Activated T-helper 2 cell treated with anti-CD3 and anti-CD28 coated beads, Interferon-gamma antibody, Interleukin-2, Interleukin-4, amounts not matched to agents 10 μg/mL and 5 μg/mL and 100 μg/mL, durations not matched to agents 14 hours and 24 hours and 36 hours (primary cell): ENCODE measurements at regions of chr13 and their contacts with region 1.

Region 1: GRCh38 chr13:51452361-51453206 is at the start of gene INTS6:
- DNase-seq: peak; percentile 99
- H3K4me3 Mint-ChIP-seq: peak within 1 kb of the TSS; percentile 94
- H3K27ac Mint-ChIP-seq: peak within 1 kb of the TSS; percentile 99
- H3K4me1 Mint-ChIP-seq: peaks cover 31% of the 10 kb centered on the region
- H3K27me3 Mint-ChIP-seq: no peaks in the 10 kb centered on the region
- total RNA-seq, gene INTS6: 54.9 and 55.9 TPM in 2 replicates

Region 2: GRCh38 chr13:51230477-51231105 is 222.0 kb before region 1 on chr13:
- intact Hi-C with region 1: no loop called
- DNase-seq: no peak
- H3K4me3 Mint-ChIP-seq: no peak overlapping the region
- H3K27ac Mint-ChIP-seq: no peak overlapping the region
- H3K4me1 Mint-ChIP-seq: peaks cover 3% of the 10 kb centered on the region
- H3K27me3 Mint-ChIP-seq: peaks cover 48% of the 10 kb centered on the region

Region 3: DNA sequence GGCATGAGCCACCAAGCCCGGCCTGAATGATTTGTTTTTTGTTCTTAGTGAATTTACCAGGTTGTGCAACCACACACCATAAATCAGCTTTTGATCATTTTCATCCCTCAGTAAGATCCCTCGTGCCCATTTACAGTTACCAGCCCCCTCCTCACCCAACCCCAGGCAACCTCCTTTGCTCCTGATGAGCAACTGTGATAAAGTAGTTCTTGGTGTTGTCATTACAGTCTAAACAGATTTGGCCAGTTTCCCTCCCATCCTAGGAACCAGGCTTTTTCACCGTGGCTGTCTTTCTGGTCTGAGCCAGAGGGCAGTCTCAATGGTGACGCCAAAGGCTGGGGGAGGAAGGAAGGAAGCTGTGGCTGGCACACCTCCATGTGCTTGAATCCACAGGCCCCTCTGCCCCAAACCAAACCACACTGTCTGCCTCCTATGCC is 70.5 kb after region 1 on chr13:
- intact Hi-C with region 1: loop called (anchors 2 kb)
- DNase-seq: no peak
- H3K4me3 Mint-ChIP-seq: no peak overlapping the region
- H3K27ac Mint-ChIP-seq: no peak overlapping the region
- H3K4me1 Mint-ChIP-seq: peaks cover 24% of the 10 kb centered on the region
- H3K27me3 Mint-ChIP-seq: no peaks in the 10 kb centered on the region

Region 4: DNA sequence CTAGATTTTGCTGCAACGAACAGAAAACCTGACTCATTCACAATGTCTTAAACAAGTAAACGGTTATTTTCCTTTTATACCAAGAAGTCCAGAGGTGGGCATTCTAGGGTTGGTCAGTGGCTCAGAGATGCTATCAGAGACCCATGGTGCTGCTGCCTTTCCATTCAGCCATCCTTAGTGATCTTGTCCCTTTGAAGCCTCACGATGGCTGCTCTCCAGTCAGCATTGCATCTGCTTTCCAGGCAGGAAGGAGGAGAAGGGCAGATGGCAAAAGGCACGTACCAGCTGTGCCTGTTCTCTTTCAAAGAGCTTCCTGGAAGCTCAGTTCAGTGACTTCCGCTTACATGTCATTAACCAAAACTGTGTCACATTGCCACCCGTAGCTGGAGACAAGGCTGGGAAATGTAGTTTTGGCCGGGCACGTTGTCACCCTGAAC is 161.8 kb after region 1 on chr13:
- intact Hi-C with region 1: loop called (anchors 1 kb)
- DNase-seq: peak; percentile 34
- H3K4me3 Mint-ChIP-seq: peak overlapping the region; percentile 82
- H3K27ac Mint-ChIP-seq: peak overlapping the region; percentile 97
- H3K4me1 Mint-ChIP-seq: peaks cover 17% of the 10 kb centered on the region
- H3K27me3 Mint-ChIP-seq: no peaks in the 10 kb centered on the region

Region 5: GRCh38 chr13:51803422-51804294 is 351.1 kb after region 1 on chr13 and contains the start of gene DHRS12:
- intact Hi-C with region 1: loop called (anchors 1 kb)
- DNase-seq: peak; percentile 82
- H3K4me3 Mint-ChIP-seq: peak within 1 kb of the TSS; percentile 87
- H3K27ac Mint-ChIP-seq: peak within 1 kb of the TSS; percentile 98
- H3K4me1 Mint-ChIP-seq: peaks cover 33% of the 10 kb centered on the region
- H3K27me3 Mint-ChIP-seq: peaks cover 4% of the 10 kb centered on the region
- total RNA-seq, gene DHRS12: 2.2 and 3.1 TPM in 2 replicates

Region 6: DNA sequence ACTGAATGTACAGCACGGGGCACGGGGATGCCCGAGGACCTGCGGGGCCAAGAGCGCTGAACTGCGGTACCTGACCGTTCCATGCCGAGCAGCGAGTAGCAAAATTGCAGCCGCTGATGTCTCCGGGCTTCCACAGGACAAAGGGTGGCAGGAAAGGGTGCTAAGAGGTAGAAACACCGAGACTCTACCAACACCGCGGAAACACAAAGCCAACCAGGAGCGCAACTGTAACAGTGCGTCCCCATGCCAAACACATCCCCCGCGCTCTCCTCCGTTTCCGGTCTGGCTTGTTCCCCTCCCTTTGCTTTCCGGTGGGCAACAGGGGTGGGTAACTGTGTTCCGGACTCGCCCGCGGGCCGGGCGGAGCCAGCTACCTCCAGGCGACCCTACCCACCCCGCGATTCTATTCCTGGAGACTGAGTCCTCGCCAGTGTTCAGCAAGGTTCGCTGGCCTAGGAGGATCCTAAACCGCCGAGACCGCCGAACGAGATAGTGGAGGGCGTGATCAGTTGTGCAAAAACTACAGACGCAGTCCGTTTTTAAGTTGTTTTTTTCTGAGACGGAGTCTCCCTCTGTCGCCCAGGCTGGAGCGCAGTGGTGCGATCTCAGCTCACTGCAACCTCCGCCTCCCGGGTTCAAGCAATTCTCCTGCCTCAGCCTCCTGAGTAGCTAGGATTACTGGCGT is 741.7 kb after region 1 on chr13:
- intact Hi-C with region 1: loop called (anchors 10 kb)
- DNase-seq: peak; percentile 88
- H3K4me3 Mint-ChIP-seq: peak overlapping the region; percentile 95
- H3K27ac Mint-ChIP-seq: peak overlapping the region; percentile 96
- H3K4me1 Mint-ChIP-seq: peaks cover 9% of the 10 kb centered on the region
- H3K27me3 Mint-ChIP-seq: no peaks in the 10 kb centered on the region

Region 7: GRCh38 chr13:52652196-52652979 is 1199.8 kb after region 1 on chr13 and contains the start of gene SUGT1:
- intact Hi-C with region 1: loop called (anchors 5 kb)
- DNase-seq: peak; percentile 94
- H3K4me3 Mint-ChIP-seq: no peak within 1 kb of the TSS
- H3K27ac Mint-ChIP-seq: no peak within 1 kb of the TSS
- H3K4me1 Mint-ChIP-seq: peaks cover 14% of the 10 kb centered on the region
- H3K27me3 Mint-ChIP-seq: no peaks in the 10 kb centered on the region
- total RNA-seq, gene SUGT1: 66.5 and 72.3 TPM in 2 replicates